ENCODE measurements at regions of chr1 and their contacts with region 1.

Region 1: DNA sequence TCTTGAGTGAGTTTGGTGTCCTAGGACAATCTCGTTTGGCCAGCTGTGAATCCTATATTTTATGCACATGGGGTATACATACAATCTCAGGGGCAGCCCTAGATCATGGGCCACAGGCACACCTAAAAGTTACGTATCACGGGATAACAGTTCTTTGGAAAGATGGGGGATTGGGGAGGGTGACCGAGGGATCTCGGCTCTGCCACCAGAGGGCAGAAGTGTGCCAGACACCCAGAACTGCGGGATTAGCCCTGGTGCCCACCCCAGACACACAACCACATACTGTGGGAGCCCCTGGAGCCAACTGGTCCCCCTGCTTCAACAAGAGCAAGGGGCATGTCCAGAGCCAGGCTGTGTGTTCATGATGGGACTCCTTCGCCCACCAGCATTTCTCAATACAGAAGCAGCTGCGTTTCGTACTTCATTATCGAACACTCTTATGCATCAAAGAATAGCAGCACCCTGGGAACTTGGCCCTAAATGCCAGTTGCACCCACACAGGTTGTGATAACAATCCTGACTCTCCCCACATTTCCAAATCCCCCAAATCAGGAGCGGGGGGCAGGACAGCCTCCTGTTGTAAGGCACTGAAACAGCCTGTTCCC is 37.4 kb downstream of the TMCO4 start:
- DNase-seq: no peak
- H3K4me3 ChIP-seq: no peak overlapping the region
- H3K27ac ChIP-seq: no peak overlapping the region
- H3K4me1 ChIP-seq: peaks cover 22% of the 10 kb centered on the region
- H3K27me3 ChIP-seq: no peaks in the 10 kb centered on the region
- CTCF ChIP-seq: peak; percentile 72 to 90

Region 2: GRCh38 chr1:19698181-19698580 is 64.1 kb before region 1 on chr1:
- CTCF ChIA-PET with region 1: no interaction called
- dilution Hi-C with region 1: loop called (anchors 5 kb)
- in situ Hi-C with region 1: no loop called
- intact Hi-C with region 1: no loop called
- DNase-seq: no peak
- H3K4me3 ChIP-seq: no peak overlapping the region
- H3K27ac ChIP-seq: no peak overlapping the region
- H3K4me1 ChIP-seq: no peaks in the 10 kb centered on the region
- H3K27me3 ChIP-seq: no peaks in the 10 kb centered on the region
- CTCF ChIP-seq: no peak

Region 3: GRCh38 chr1:19715334-19716203 is 46.7 kb before region 1 on chr1:
- CTCF ChIA-PET with region 1: no interaction called
- dilution Hi-C with region 1: no loop called
- in situ Hi-C with region 1: no loop called
- intact Hi-C with region 1: loop called (anchors 1 kb)
- DNase-seq: peak; percentile 85
- H3K4me3 ChIP-seq: no peak overlapping the region
- H3K27ac ChIP-seq: no peak overlapping the region
- H3K4me1 ChIP-seq: no peaks in the 10 kb centered on the region
- H3K27me3 ChIP-seq: no peaks in the 10 kb centered on the region
- CTCF ChIP-seq: peak; percentile 84 to 95

Region 4: GRCh38 chr1:19785295-19786059 is 23.2 kb after region 1 on chr1:
- CTCF ChIA-PET with region 1: interaction called, 10 read pairs
- dilution Hi-C with region 1: no loop called
- in situ Hi-C with region 1: no loop called
- intact Hi-C with region 1: no loop called
- DNase-seq: no peak
- H3K4me3 ChIP-seq: no peak overlapping the region
- H3K27ac ChIP-seq: no peak overlapping the region
- H3K4me1 ChIP-seq: no peaks in the 10 kb centered on the region
- H3K27me3 ChIP-seq: no peaks in the 10 kb centered on the region
- CTCF ChIP-seq: no peak

Measured in mammary epithelial cell (primary cell).